Esophagus squamous epithelium (tissue), 5 donors: ENCODE measurements at regions of chr10 and their contacts with region 1.

Region 1: DNA sequence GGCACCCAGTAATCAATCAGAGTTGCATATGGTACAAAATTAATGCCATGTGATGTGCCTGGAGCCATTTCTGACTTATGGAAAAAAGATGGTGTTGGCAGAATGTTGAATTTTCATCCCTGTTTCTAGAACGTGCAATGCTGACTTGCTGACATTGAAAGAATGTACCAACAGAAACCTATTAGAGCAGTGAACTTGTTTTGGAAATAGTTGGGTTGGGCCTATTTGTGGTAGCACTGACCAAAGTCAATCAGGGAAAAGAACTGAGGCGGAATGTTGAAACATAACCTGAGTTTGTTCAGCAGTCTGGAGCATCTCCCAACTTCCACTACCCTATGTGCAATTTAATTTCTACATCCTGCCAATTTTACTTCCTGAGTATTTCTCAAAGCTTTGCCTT is 11.7 kb upstream of the KIAA1217 start:
- DNase-seq: no peak
- H3K4me3 ChIP-seq: no peak overlapping the region
- H3K27ac ChIP-seq: no peak overlapping the region
- H3K4me1 ChIP-seq: peaks cover 0 to 9% (median 0%) of the 10 kb centered on the region in 3 donors
- H3K27me3 ChIP-seq: no peaks in the 10 kb centered on the region
- CTCF ChIP-seq: no peak
- POLR2A ChIP-seq: no peak

Region 2: DNA sequence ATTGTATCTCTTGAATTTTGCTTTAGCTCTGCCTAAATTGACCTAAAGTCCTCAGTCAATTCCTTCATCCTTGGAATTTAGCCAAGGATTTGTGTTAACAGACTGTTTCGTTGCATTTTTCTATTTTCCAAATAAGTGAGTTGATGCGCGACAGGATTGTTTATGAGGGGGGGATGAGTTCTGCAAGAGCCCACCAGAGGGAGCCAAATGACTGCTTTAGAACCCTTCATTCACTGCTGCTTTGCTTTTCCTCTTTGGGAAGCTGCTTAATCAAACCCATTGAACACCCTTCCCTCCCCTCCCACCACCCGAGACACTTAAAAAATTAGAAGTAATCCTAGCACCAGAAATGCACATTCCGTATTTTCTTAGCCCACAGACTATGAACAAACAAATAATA is 1038.9 kb before region 1 on chr10:
- intact Hi-C with region 1: loop called (anchors 10 kb)
- DNase-seq: no peak
- H3K4me3 ChIP-seq: no peak overlapping the region
- H3K27ac ChIP-seq: no peak overlapping the region
- H3K4me1 ChIP-seq: peaks cover 0 to 9% (median 0%) of the 10 kb centered on the region in 3 donors
- H3K27me3 ChIP-seq: peaks cover 0 to 36% (median 0%) of the 10 kb centered on the region in 4 donors
- CTCF ChIP-seq: peak; percentile 68 to 78 (median 74)
- POLR2A ChIP-seq: no peak

Region 3: GRCh38 chr10:24255881-24256311 is 58.6 kb after region 1 on chr10:
- intact Hi-C with region 1: no loop called
- DNase-seq: no peak
- H3K4me3 ChIP-seq: peak overlapping the region; percentile 35 to 52 (median 50)
- H3K27ac ChIP-seq: peak overlapping the region; percentile 83 to 97 (median 95)
- H3K4me1 ChIP-seq: peaks cover 7 to 95% (median 18%) of the 10 kb centered on the region in 3 donors
- H3K27me3 ChIP-seq: no peaks in the 10 kb centered on the region
- CTCF ChIP-seq: no peak
- POLR2A ChIP-seq: no peak

Region 4: GRCh38 chr10:24428410-24428782 is 231.1 kb after region 1 on chr10:
- intact Hi-C with region 1: no loop called
- DNase-seq: no peak
- H3K4me3 ChIP-seq: no peak overlapping the region
- H3K27ac ChIP-seq: no peak overlapping the region
- H3K4me1 ChIP-seq: no peaks in the 10 kb centered on the region
- H3K27me3 ChIP-seq: no peaks in the 10 kb centered on the region
- CTCF ChIP-seq: no peak
- POLR2A ChIP-seq: no peak